ENCODE measurements at regions of chr1 and their contacts with region 1.

Region 1: GRCh38 chr1:109493805-109494539 is at the start of gene CYB561D1:
- DNase-seq: peak; percentile 29
- H3K4me3 ChIP-seq: peak within 1 kb of the TSS; percentile 81 to 99 (median 88)
- H3K27ac ChIP-seq: peak within 1 kb of the TSS; percentile 83 to 94 (median 88)
- H3K4me1 ChIP-seq: peaks cover 21 to 54% (median 26%) of the 10 kb centered on the region in 3 donors
- H3K27me3 ChIP-seq: no peaks in the 10 kb centered on the region
- CTCF ChIP-seq: peak; percentile 88 to 99 (median 96)
- POLR2A ChIP-seq: peak in 2 of 4 donors; percentile 51 to 64
- total RNA-seq, gene CYB561D1: 3.1 to 12.7 (median 7.3) TPM

Region 2: GRCh38 chr1:109131059-109131458 is 362.9 kb before region 1 on chr1:
- intact Hi-C with region 1: no loop called
- DNase-seq: no peak
- H3K4me3 ChIP-seq: no peak overlapping the region
- H3K27ac ChIP-seq: no peak overlapping the region
- H3K4me1 ChIP-seq: no peaks in the 10 kb centered on the region
- H3K27me3 ChIP-seq: no peaks in the 10 kb centered on the region
- CTCF ChIP-seq: no peak
- POLR2A ChIP-seq: no peak

Region 3: GRCh38 chr1:109532365-109533136 is 38.6 kb after region 1 on chr1:
- intact Hi-C with region 1: loop called (anchors 5 kb)
- DNase-seq: no peak
- H3K4me3 ChIP-seq: peak overlapping the region in 2 of 4 donors; percentile 14 to 39
- H3K27ac ChIP-seq: peak overlapping the region; percentile 13 to 45 (median 29)
- H3K4me1 ChIP-seq: peaks cover 0 to 26% (median 5%) of the 10 kb centered on the region in 3 donors
- H3K27me3 ChIP-seq: no peaks in the 10 kb centered on the region
- CTCF ChIP-seq: peak; percentile 94 to 99 (median 98)
- POLR2A ChIP-seq: no peak

Region 4: DNA sequence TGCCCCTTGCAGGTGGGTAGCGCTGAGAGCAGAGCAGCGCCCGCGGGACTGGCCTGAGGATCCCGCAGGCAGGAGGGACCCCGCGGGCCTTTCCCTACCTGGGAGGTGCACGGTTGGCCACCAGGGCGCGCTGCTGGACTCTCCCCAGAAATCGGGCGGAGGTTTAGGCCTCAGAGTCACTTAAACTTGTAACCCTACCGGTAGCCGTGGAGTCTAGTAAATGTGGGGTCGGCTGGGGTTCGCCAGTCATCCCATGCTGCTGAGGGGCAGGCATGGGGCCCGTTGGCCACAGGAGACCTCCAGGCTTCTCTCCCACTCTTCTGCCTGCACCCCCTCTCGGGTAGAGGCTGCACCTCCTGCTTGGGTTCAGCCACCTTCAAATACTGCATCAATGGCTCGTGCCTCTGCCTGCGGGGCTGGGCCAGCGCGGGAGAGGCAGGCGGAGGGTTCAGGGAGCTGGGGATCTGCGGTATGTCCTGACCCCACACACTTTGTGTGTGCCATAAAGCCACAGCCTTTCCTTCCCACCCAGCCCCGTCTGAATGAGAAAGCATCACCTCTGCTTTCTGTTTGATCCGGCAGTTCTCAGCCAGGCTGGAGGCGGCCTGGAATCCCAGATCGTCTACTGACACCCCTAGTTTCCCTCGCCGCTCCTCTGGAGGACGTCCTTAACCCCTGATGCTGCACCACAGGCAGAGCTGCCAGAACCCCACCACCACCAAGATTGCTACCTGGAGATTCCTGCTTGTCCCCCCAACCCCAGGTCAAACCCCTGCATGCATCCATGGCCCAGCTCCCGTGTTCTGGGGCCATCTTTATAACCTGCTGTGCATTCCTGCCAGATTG is 149.6 kb after region 1 on chr1:
- intact Hi-C with region 1: no loop called
- DNase-seq: no peak
- H3K4me3 ChIP-seq: peak overlapping the region in 1 of 4 donors; percentile 29
- H3K27ac ChIP-seq: no peak overlapping the region
- H3K4me1 ChIP-seq: peaks cover 0 to 15% (median 7%) of the 10 kb centered on the region in 3 donors
- H3K27me3 ChIP-seq: no peaks in the 10 kb centered on the region
- CTCF ChIP-seq: peak; percentile 90 to 96 (median 92)
- POLR2A ChIP-seq: no peak

Measured in esophagus squamous epithelium (tissue), 5 donors.